MCF 10A (cell line): ENCODE measurements at regions of chrX and their contacts with region 1.

Region 1: DNA sequence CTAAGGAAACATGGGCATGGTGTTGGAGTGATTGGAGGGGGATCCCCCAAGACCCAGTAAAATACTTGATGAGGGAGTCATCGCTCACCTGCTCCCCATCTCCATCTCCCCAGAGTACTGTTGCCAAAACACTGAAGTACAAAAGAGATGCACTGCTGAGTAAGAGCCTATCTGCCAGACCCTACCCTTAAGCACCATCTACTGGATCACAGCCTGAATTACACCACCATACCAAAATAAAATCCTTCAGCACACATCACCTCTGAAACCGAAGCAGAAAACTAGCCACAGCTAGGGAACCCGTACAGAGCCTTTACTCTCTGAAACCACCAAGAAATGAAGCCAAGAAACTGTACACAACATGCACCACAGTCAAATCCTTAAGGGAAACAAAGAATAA is 466.3 kb upstream of the ACTRT1 start:
- DNase-seq: peak; percentile 42
- H3K4me3 Mint-ChIP-seq: no peak overlapping the region
- H3K27ac Mint-ChIP-seq: no peak overlapping the region
- H3K4me1 Mint-ChIP-seq: no peaks in the 10 kb centered on the region
- H3K27me3 Mint-ChIP-seq: no peaks in the 10 kb centered on the region
- CTCF ChIP-seq: peak; percentile 64

Region 2: DNA sequence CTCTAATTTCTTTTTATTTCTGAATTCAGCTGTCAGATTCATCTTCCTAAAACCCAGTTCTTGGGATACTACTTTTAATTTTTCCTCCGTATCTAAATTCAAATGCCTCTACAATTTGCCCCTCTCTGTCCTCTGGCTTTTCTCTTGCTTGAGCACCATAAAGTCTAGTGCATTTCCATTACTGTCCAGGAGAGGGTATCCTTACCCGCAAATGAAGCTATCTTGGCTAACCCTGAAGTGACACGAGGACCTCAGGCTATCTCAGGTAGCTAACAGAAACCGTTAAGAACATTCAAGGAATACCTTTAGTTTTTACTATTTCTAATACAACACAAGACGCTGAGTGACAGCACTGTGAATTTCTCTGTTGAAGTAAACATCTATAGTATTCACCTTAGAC is 1748.3 kb before region 1 on chrX:
- CTCF ChIA-PET with region 1: no interaction called
- POLR2A ChIA-PET with region 1: no interaction called
- intact Hi-C with region 1: loop called (anchors 5 kb)
- DNase-seq: peak; percentile 57
- H3K4me3 Mint-ChIP-seq: no peak overlapping the region
- H3K27ac Mint-ChIP-seq: no peak overlapping the region
- H3K4me1 Mint-ChIP-seq: no peaks in the 10 kb centered on the region
- H3K27me3 Mint-ChIP-seq: no peaks in the 10 kb centered on the region
- CTCF ChIP-seq: peak; percentile 62

Region 3: GRCh38 chrX:128106630-128107029 is 411.9 kb before region 1 on chrX:
- CTCF ChIA-PET with region 1: interaction called, 25 read pairs
- POLR2A ChIA-PET with region 1: no interaction called
- intact Hi-C with region 1: loop called (anchors 1 kb)
- DNase-seq: peak; percentile 46
- H3K4me3 Mint-ChIP-seq: no peak overlapping the region
- H3K27ac Mint-ChIP-seq: no peak overlapping the region
- H3K4me1 Mint-ChIP-seq: no peaks in the 10 kb centered on the region
- H3K27me3 Mint-ChIP-seq: no peaks in the 10 kb centered on the region
- CTCF ChIP-seq: peak; percentile 36

Region 4: DNA sequence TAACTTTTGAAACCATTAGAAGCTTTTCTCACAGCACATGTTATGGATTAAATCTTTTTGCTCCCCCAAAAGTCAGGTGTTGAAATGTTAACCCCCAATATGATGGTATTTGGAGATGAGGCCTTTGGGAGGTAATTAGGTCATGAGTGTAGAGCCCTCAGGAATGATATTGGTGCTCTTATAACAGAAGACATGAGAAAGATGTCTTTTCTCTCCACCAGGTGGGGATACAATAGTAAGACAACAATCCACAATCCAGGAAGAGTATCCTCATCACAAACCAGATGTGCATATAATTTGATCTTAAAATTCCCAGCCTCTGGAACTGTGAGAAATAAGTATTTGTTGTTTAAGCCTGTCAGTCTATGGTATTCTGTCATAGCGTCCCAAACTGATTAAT is 266.9 kb before region 1 on chrX:
- CTCF ChIA-PET with region 1: interaction called, 11 read pairs
- POLR2A ChIA-PET with region 1: interaction called, 3 read pairs
- intact Hi-C with region 1: loop called (anchors 1 kb)
- DNase-seq: peak; percentile 11
- H3K4me3 Mint-ChIP-seq: no peak overlapping the region
- H3K27ac Mint-ChIP-seq: no peak overlapping the region
- H3K4me1 Mint-ChIP-seq: no peaks in the 10 kb centered on the region
- H3K27me3 Mint-ChIP-seq: no peaks in the 10 kb centered on the region
- CTCF ChIP-seq: no peak

Region 5: DNA sequence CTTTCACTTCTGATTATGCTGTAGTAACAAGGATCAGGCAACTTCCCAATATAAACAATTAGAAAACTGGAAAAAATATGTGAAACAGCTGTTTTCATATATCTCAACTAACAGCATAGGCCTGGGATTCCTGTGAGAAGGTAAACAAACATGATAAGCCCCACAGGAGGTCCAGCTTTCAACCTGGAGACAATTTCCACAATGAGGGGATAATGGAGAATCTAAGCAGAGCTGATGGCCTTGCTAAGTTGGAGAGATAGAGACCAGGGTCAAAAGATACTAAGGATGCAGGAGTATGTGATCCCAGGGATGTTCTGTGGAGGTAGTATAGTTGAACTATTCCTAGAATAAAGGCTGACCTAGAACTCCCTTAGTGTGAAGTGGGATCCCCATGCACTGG is 14.0 kb before region 1 on chrX:
- CTCF ChIA-PET with region 1: interaction called, 20 read pairs
- POLR2A ChIA-PET with region 1: no interaction called
- intact Hi-C with region 1: no loop called
- DNase-seq: no peak
- H3K4me3 Mint-ChIP-seq: no peak overlapping the region
- H3K27ac Mint-ChIP-seq: no peak overlapping the region
- H3K4me1 Mint-ChIP-seq: no peaks in the 10 kb centered on the region
- H3K27me3 Mint-ChIP-seq: no peaks in the 10 kb centered on the region
- CTCF ChIP-seq: no peak